ENCODE measurements at regions of chr4 and their contacts with region 1.

Region 1: DNA sequence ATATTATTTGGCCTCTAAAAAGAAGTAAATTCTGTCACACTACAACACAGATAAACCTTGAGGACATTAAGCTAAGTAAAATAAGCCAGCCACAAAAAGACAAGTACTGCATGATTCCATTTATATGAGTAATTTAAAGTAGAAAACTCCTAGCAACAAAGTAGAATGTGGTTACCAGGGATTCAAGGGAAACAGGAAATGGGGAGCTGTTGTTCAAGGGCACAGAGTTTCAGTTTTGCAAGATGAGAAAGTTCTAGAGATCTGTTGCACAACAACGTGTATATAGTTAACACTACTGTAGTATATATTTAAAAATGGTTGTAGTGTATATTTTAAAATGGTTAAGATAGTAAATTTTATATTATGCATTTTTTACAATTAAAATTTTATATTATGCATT is 25.4 kb downstream of the SEC31A start:
- DNase-seq: no peak
- ATAC-seq: peak; percentile 52 to 80
- H3K4me3 ChIP-seq: no peak overlapping the region
- H3K27ac ChIP-seq: no peak overlapping the region
- H3K4me1 ChIP-seq: no peaks in the 10 kb centered on the region
- H3K27me3 ChIP-seq: no peaks in the 10 kb centered on the region

Region 2: DNA sequence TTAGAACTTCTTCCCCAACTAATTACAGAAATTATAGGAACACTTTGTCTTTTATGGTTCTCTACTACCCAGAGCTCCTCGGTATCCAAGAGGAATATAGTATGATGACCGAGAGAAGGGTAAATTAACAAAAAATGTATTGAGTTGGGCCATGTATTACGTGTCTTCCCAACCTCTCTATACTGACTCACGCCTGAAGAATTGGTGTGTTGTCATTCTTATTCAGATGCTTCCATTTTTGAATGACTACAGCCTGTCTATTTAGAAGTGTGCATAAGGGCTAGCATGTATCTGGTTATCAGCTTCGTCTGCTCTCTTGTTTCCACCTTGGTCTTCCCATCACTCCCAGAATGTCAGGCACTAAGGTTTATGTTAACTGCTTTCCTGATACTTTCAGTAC is 42.5 kb before region 1 on chr4:
- intact Hi-C with region 1: loop called in 2 of 4 experiments (anchors 10 kb)
- DNase-seq: no peak
- ATAC-seq: no peak
- H3K4me3 ChIP-seq: no peak overlapping the region
- H3K27ac ChIP-seq: no peak overlapping the region
- H3K4me1 ChIP-seq: no peaks in the 10 kb centered on the region
- H3K27me3 ChIP-seq: no peaks in the 10 kb centered on the region

Region 3: GRCh38 chr4:83124111-83124780 is 258.7 kb after region 1 on chr4:
- intact Hi-C with region 1: no loop called
- DNase-seq: no peak
- ATAC-seq: peak in 1 of 2 donors; percentile 43
- H3K4me3 ChIP-seq: no peak overlapping the region
- H3K27ac ChIP-seq: no peak overlapping the region
- H3K4me1 ChIP-seq: no peaks in the 10 kb centered on the region
- H3K27me3 ChIP-seq: no peaks in the 10 kb centered on the region

Region 4: GRCh38 chr4:83267121-83267829 is 401.7 kb after region 1 on chr4:
- intact Hi-C with region 1: no loop called
- DNase-seq: peak in 1 of 3 donors; percentile 38
- ATAC-seq: peak; percentile 29 to 69
- H3K4me3 ChIP-seq: no peak overlapping the region
- H3K27ac ChIP-seq: no peak overlapping the region
- H3K4me1 ChIP-seq: no peaks in the 10 kb centered on the region
- H3K27me3 ChIP-seq: no peaks in the 10 kb centered on the region